Activated CD8-positive, alpha-beta T cell treated with anti-CD3 and anti-CD28 coated beads, Interleukin-2, amount 10 ng/mL, durations not matched to agents 7 days and 5 days (primary cell): ENCODE measurements at regions of chr6 and their contacts with region 1.

Region 1: DNA sequence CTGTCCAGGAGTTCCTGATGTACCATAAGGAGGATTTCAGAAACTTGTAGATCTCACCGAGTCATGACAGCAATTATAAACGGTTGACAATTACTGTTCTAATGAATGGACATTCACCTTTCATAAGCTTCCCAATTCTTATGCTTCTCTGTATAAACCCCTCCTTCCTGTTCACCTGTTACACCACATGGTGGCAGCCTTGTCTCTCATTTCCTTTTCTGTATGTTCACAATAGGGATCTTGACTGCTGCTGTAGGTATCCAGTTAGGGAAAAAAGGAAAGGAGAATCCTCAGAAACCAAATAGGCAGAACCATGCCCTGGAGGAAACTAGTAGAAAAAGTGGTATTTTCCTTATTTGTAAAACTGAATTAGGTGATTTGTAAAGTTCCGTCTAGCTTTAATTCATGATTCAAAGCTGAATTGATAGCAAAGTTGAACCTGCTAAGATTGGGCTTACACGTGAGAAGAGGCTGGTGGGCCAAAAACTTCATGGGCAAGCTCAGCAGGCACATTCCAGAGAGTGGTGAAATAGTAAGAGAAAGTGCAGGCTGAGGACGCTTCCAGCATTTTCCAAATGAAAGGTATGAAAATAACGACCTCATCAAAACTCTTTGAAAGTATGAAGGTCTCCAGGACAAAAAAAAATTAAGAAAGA is 29.0 kb upstream of the TBPL1 start:
- DNase-seq: peak; percentile 72
- ATAC-seq: peak; percentile 78
- H3K4me3 Mint-ChIP-seq: no peak overlapping the region
- H3K27ac Mint-ChIP-seq: no peak overlapping the region
- H3K4me1 Mint-ChIP-seq: no peaks in the 10 kb centered on the region
- H3K27me3 Mint-ChIP-seq: peaks cover 22% of the 10 kb centered on the region

Region 2: DNA sequence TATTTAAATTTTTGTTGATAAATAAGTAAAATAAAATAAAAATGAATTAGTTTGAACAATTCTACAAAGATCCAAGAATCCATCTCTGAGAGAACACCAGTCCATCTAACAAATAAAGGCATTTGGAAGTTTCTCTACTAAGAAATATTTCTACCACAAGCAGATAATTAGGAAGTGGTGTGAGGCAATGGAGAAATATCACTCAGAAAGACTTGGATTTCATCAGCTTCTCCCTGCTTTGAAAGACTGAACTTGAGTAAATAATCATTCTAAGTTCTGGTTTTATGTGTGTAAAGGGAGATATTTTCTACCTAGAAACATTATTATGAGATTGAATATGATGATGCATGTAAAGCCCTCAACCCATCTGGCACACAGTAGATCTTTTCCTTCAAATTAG is 52.9 kb before region 1 on chr6:
- CTCF ChIA-PET with region 1: no interaction called
- POLR2A ChIA-PET with region 1: no interaction called
- DNase-seq: no peak
- ATAC-seq: no peak
- H3K4me3 Mint-ChIP-seq: no peak overlapping the region
- H3K27ac Mint-ChIP-seq: no peak overlapping the region
- H3K4me1 Mint-ChIP-seq: no peaks in the 10 kb centered on the region
- H3K27me3 Mint-ChIP-seq: peaks cover 12% of the 10 kb centered on the region

Region 3: DNA sequence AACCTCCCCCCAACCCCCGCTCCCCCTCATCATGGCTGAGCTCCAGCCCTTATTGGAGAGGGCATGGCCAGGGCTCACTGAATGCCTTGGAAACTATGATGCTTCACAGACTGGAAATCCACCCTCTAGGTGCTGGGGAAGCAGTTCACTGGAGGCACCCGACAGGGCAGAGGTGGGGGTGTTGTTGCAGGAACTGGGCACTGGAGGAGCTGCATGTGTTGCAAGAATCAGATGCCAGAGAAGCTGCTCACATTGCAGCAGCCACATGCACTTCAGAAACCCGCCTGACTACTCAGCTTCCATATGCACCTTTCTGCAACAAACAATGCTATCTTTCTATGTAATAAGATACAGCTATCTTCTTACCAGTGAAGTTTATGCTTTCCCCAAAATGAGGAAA is 21.1 kb after region 1 on chr6:
- CTCF ChIA-PET with region 1: interaction called, 20 read pairs
- POLR2A ChIA-PET with region 1: no interaction called
- DNase-seq: no peak
- ATAC-seq: no peak
- H3K4me3 Mint-ChIP-seq: no peak overlapping the region
- H3K27ac Mint-ChIP-seq: no peak overlapping the region
- H3K4me1 Mint-ChIP-seq: no peaks in the 10 kb centered on the region
- H3K27me3 Mint-ChIP-seq: peaks cover 14% of the 10 kb centered on the region

Region 4: GRCh38 chr6:133973109-133973971 is 49.3 kb after region 1 on chr6:
- CTCF ChIA-PET with region 1: interaction called, 54 read pairs
- POLR2A ChIA-PET with region 1: no interaction called
- DNase-seq: no peak
- ATAC-seq: peak; percentile 45
- H3K4me3 Mint-ChIP-seq: no peak overlapping the region
- H3K27ac Mint-ChIP-seq: no peak overlapping the region
- H3K4me1 Mint-ChIP-seq: peaks cover 17% of the 10 kb centered on the region
- H3K27me3 Mint-ChIP-seq: no peaks in the 10 kb centered on the region

Region 5: GRCh38 chr6:134058622-134059366 is 134.7 kb after region 1 on chr6:
- CTCF ChIA-PET with region 1: interaction called, 125 read pairs
- POLR2A ChIA-PET with region 1: no interaction called
- DNase-seq: no peak
- ATAC-seq: no peak
- H3K4me3 Mint-ChIP-seq: no peak overlapping the region
- H3K27ac Mint-ChIP-seq: no peak overlapping the region
- H3K4me1 Mint-ChIP-seq: no peaks in the 10 kb centered on the region
- H3K27me3 Mint-ChIP-seq: peaks cover 5% of the 10 kb centered on the region

Region 6: DNA sequence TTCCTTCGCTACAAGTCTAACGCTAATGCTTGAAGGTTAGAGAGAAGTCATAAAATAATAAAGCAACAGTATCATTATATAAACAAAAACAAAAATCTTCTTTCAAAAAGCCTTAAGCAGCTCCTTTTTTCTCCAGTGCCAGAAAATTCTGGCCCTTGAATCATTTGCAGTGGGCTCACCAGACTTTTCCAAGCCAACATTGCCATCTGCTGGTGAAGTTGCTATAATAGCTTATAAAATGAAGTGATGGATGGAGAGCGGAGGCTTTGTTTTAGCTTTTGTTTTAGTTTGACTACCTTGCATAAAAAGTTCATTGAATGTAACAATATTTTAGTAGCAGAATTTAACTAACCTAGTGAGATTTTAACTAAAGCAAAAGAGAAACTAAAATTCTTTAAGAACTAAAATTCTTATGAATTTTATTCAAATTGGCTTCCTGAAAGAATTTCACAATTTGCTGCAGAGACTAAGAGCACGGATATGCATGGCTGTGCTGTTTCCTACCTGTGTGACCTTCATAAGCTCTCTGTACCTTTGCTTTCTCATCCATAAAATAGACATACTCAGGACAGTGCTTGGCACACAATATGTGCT is 173.1 kb after region 1 on chr6:
- CTCF ChIA-PET with region 1: interaction called, 276 read pairs
- POLR2A ChIA-PET with region 1: no interaction called
- DNase-seq: peak; percentile 79
- ATAC-seq: peak; percentile 68
- H3K4me3 Mint-ChIP-seq: no peak overlapping the region
- H3K27ac Mint-ChIP-seq: no peak overlapping the region
- H3K4me1 Mint-ChIP-seq: peaks cover 6% of the 10 kb centered on the region
- H3K27me3 Mint-ChIP-seq: peaks cover 23% of the 10 kb centered on the region